HEK293 (cell line): ENCODE measurements at regions of chr3 and their contacts with region 1.

Region 1: GRCh38 chr3:458124-458523 is 261.6 kb downstream of the CHL1 start:
- H3K4me3 ChIP-seq: no peak overlapping the region
- H3K27ac ChIP-seq: no peak overlapping the region
- H3K4me1 ChIP-seq: no peaks in the 10 kb centered on the region
- CTCF ChIP-seq: no peak

Region 2: DNA sequence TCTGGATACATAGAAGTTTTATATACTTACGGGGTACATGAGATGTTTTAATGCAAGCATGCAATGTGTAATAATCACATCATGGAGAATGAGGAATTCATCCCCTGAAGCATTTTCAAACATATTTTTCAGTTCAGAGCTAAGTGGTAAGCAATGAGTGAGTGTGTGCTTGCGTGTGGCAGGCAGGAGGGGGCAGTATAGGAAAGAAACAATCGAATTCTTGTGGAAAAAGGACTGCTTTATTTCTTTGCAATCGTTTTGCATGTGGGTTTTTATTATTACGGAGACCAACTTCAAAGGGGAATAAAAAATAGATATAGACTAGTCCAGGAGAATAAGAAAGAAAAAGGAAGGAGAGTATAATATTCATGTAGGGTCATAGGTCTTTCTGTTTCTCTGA is 10.0 kb after region 1 on chr3:
- CTCF ChIA-PET with region 1: interaction called, 12 read pairs
- POLR2A ChIA-PET with region 1: no interaction called
- H3K4me3 ChIP-seq: no peak overlapping the region
- H3K27ac ChIP-seq: no peak overlapping the region
- H3K4me1 ChIP-seq: no peaks in the 10 kb centered on the region
- CTCF ChIP-seq: no peak